ENCODE measurements at regions of chr4 and their contacts with region 1.

Region 1: DNA sequence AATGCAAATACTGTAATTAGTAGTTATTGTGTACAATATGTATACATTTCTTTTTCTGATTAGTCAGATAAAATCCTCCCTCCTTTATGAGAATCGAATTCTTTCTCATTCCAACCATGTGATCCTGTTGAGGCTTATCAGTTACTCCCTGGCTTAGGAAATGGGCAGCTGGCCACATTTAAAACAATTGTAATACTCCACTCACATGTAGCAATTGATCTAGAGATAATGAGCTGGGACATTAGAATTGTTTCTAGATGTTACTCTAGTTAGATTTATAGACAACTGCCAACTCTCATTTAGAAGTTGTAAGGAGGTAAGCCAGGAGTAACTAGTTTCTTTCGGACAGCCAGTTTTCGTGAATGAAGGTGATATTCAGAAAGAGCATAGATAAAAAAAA is 859.3 kb upstream of the AADAT start:
- DNase-seq: no peak
- H3K4me3 ChIP-seq: no peak overlapping the region
- H3K27ac ChIP-seq: no peak overlapping the region
- H3K4me1 ChIP-seq: no peaks in the 10 kb centered on the region
- H3K27me3 ChIP-seq: no peaks in the 10 kb centered on the region
- CTCF ChIP-seq: no peak

Region 2: DNA sequence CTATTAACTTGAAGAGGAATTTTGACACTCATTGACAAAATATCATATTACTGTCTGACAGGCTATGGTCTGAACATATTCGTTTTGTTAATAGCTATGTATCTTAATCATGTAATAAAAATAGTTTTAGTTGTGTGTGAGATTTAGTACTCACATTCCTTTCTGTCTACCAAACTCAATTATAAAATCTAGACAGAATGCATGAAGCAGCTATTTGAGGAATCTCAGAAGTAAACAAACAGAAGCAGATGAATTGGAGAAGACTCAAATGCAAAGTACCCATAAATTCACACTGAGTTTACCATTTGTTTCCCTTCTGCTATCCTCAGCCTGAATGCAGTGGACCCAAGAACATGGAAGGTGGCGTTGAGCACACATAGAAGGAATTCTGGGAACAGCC is 17.8 kb before region 1 on chr4:
- CTCF ChIA-PET with region 1: no interaction called
- POLR2A ChIA-PET with region 1: no interaction called
- intact Hi-C with region 1: loop called (anchors 2 kb)
- DNase-seq: no peak
- H3K4me3 ChIP-seq: no peak overlapping the region
- H3K27ac ChIP-seq: no peak overlapping the region
- H3K4me1 ChIP-seq: no peaks in the 10 kb centered on the region
- H3K27me3 ChIP-seq: no peaks in the 10 kb centered on the region
- CTCF ChIP-seq: no peak

Region 3: DNA sequence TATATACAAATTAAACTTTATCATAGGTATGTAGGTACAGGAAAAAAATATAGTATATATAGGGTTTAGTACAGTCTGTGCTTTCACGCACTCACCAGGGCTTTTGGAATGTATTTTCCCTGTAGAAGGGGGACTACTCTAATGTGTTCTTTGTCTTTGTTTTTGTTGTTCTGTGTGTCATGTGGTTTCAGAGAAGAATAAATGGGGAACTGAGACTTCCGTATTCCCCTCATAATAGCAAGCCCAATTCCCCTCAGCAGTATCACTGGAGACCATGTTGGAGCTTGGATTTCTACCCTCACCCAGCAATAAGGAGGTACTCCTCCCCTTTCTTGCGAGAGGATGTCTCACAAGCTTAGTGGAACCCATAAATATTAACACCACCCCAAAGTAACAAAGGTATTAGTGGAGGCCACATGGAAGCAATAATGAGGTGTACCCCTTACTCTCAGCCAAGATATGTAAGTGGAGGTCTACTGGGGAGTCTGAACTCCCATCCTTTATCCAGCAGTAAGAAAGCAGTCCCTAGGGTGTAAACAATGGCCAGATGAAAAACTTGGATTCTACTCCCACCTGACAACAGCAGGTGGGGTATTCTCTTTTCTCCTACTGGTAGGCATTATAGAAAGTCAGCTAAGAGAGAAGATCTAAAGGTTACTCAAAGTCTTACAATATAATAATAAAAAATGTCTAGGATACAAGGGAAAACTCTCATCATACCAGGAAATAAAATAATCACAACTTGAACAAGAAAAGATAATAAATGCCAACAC is 58.7 kb after region 1 on chr4:
- CTCF ChIA-PET with region 1: no interaction called
- POLR2A ChIA-PET with region 1: no interaction called
- intact Hi-C with region 1: no loop called
- DNase-seq: no peak
- H3K4me3 ChIP-seq: no peak overlapping the region
- H3K27ac ChIP-seq: no peak overlapping the region
- H3K4me1 ChIP-seq: no peaks in the 10 kb centered on the region
- H3K27me3 ChIP-seq: no peaks in the 10 kb centered on the region
- CTCF ChIP-seq: no peak

Measured in PC-9 (cell line).